PC-9 (cell line): ENCODE measurements at regions of chr1 and their contacts with region 1.

Region 1: GRCh38 chr1:211484755-211485479 is 7.0 kb downstream of the RD3 start:
- DNase-seq: no peak
- H3K4me3 ChIP-seq: no peak overlapping the region
- H3K27ac ChIP-seq: no peak overlapping the region
- H3K4me1 ChIP-seq: peaks cover 11% of the 10 kb centered on the region
- H3K27me3 ChIP-seq: no peaks in the 10 kb centered on the region
- CTCF ChIP-seq: no peak

Region 2: GRCh38 chr1:211415700-211416099 is 69.2 kb before region 1 on chr1:
- CTCF ChIA-PET with region 1: no interaction called
- POLR2A ChIA-PET with region 1: no interaction called
- intact Hi-C with region 1: no loop called
- DNase-seq: no peak
- H3K4me3 ChIP-seq: no peak overlapping the region
- H3K27ac ChIP-seq: no peak overlapping the region
- H3K4me1 ChIP-seq: no peaks in the 10 kb centered on the region
- H3K27me3 ChIP-seq: no peaks in the 10 kb centered on the region
- CTCF ChIP-seq: no peak

Region 3: DNA sequence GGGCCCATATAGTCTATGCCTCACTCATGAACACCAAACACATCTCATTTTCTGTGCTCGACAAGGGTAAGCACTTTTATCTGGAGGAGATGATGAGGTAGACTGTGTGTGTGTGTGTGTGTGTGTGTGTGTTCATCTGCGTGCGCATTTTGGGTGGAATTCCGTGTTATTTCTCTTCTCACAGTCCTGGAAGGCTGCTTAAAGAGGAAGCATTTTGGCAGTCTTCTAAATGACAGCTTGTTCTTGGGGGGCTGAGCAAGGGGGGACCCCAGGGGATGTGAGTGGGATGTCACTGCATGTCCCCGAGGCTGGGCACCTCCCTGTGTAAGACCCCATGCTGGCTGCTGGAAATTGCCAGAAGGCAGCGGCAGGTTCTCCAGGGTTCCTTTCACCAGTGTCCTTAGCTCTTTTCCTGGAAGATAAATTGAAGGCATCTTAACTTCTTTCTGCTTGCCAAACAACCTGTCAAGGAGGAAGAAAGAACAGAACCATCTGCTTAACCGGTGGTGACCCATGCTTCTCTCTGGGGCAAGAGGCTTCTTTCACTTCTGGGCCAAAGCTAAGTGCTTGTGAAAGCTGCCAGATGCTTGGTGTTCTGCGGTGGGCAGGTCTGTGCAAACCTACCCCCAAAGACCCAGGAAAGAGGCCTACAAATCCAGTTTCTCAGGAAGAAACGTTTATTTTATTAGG is 16.9 kb after region 1 on chr1:
- CTCF ChIA-PET with region 1: no interaction called
- POLR2A ChIA-PET with region 1: interaction called, 17 read pairs
- intact Hi-C with region 1: no loop called
- DNase-seq: no peak
- H3K4me3 ChIP-seq: no peak overlapping the region
- H3K27ac ChIP-seq: no peak overlapping the region
- H3K4me1 ChIP-seq: no peaks in the 10 kb centered on the region
- H3K27me3 ChIP-seq: no peaks in the 10 kb centered on the region
- CTCF ChIP-seq: no peak

Region 4: DNA sequence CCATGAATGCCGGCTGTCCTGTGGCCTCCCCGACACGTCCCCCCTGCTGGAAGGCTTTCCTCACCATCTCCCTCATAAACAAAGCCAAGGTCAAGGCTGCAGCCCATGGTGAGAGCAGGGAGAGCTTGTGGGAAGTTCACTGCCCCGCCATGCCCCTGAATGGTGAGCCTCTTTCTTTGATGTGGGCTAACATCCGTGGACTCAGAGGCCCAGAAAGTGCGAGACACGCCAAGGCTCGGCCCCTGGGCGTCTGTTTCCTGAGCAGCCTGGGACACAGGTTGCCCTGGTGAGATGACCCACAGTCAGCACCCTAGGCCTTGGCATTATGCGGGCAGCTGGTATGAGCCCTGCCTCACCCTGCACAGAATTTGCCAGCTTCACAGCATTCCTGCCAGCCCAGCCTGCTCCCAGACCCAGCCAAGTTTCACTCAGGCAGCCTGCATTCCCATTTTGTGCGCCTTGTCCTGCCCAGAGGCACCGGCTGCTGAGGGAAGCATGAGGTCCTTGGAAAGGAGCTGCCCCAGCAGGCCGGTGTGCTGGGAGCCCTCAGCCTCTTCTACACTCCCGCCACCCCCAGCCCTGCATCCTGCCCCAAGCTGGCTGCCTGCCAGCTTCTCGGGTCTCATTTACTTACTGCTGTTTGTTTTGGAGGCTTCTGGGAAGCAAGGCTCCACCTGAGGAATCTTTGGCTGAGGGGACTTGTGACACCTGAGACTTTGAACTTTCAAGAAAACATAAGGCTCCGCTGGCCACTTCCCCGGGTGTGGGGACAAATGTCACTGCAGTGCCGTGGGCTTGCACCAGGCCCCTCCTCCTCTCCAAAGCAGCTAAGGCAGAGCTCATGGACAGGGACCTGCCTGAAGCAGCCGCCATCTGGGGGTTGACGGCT is 158.7 kb after region 1 on chr1:
- CTCF ChIA-PET with region 1: no interaction called
- POLR2A ChIA-PET with region 1: no interaction called
- intact Hi-C with region 1: no loop called
- DNase-seq: peak; percentile 90 to 91
- H3K4me3 ChIP-seq: peak overlapping the region; percentile 17; the same call in 1 of the 2 replicates
- H3K27ac ChIP-seq: peak overlapping the region; percentile 92
- H3K4me1 ChIP-seq: peaks cover 97% of the 10 kb centered on the region
- H3K27me3 ChIP-seq: no peaks in the 10 kb centered on the region
- CTCF ChIP-seq: no peak